ENCODE measurements at regions of chr15 and their contacts with region 1.

Region 1: GRCh38 chr15:63891079-63891767 is 57.5 kb upstream of the HERC1 start:
- DNase-seq: peak; percentile 60 to 78 (median 76)
- H3K4me3 ChIP-seq: no peak overlapping the region
- H3K4me3 Mint-ChIP-seq: no peak overlapping the region
- H3K27ac ChIP-seq: no peak overlapping the region
- H3K27ac Mint-ChIP-seq: peak overlapping the region in 1 of 7 donors; percentile 26
- H3K4me1 ChIP-seq: peaks cover 52 to 57% of the 10 kb centered on the region in 2 donors
- H3K4me1 Mint-ChIP-seq: peaks cover 56% of the 10 kb centered on the region
- H3K27me3 ChIP-seq: no peaks in the 10 kb centered on the region
- H3K27me3 Mint-ChIP-seq: peaks cover 0 to 7% (median 0%) of the 10 kb centered on the region in 3 donors
- CTCF ChIP-seq: peak; percentile 94

Region 2: GRCh38 chr15:63833021-63833696 is 58.1 kb before region 1 on chr15:
- intact Hi-C with region 1: loop called (anchors 2 to 5 kb)
- DNase-seq: peak in 1 of 3 donors; percentile 11
- H3K4me3 ChIP-seq: peak overlapping the region; percentile 87 to 97 (median 93)
- H3K4me3 Mint-ChIP-seq: peak overlapping the region; percentile 88 to 92
- H3K27ac ChIP-seq: peak overlapping the region; percentile 73 to 93
- H3K27ac Mint-ChIP-seq: peak overlapping the region; percentile 88 to 99 (median 96)
- H3K4me1 ChIP-seq: peaks cover 15 to 32% of the 10 kb centered on the region in 2 donors
- H3K4me1 Mint-ChIP-seq: peaks cover 40% of the 10 kb centered on the region
- H3K27me3 ChIP-seq: no peaks in the 10 kb centered on the region
- H3K27me3 Mint-ChIP-seq: peaks cover 0 to 9% (median 3%) of the 10 kb centered on the region in 3 donors
- CTCF ChIP-seq: no peak

Region 3: GRCh38 chr15:63915873-63916771 is 24.9 kb after region 1 on chr15:
- intact Hi-C with region 1: no loop called
- DNase-seq: no peak
- H3K4me3 ChIP-seq: no peak overlapping the region
- H3K4me3 Mint-ChIP-seq: no peak overlapping the region
- H3K27ac ChIP-seq: no peak overlapping the region
- H3K27ac Mint-ChIP-seq: no peak overlapping the region
- H3K4me1 ChIP-seq: no peaks in the 10 kb centered on the region
- H3K4me1 Mint-ChIP-seq: peaks cover 3% of the 10 kb centered on the region
- H3K27me3 ChIP-seq: no peaks in the 10 kb centered on the region
- H3K27me3 Mint-ChIP-seq: peaks cover 2 to 12% (median 3%) of the 10 kb centered on the region in 3 donors
- CTCF ChIP-seq: peak; percentile 16

Region 4: GRCh38 chr15:63983061-63983711 is 92.0 kb after region 1 on chr15:
- intact Hi-C with region 1: no loop called
- DNase-seq: no peak
- H3K4me3 ChIP-seq: no peak overlapping the region
- H3K4me3 Mint-ChIP-seq: no peak overlapping the region
- H3K27ac ChIP-seq: no peak overlapping the region
- H3K27ac Mint-ChIP-seq: peak overlapping the region in 2 of 7 donors; percentile 47 to 71
- H3K4me1 ChIP-seq: peaks cover 40 to 51% of the 10 kb centered on the region in 2 donors
- H3K4me1 Mint-ChIP-seq: peaks cover 52% of the 10 kb centered on the region
- H3K27me3 ChIP-seq: no peaks in the 10 kb centered on the region
- H3K27me3 Mint-ChIP-seq: peaks cover 0 to 1% (median 1%) of the 10 kb centered on the region in 3 donors
- CTCF ChIP-seq: no peak

Region 5: DNA sequence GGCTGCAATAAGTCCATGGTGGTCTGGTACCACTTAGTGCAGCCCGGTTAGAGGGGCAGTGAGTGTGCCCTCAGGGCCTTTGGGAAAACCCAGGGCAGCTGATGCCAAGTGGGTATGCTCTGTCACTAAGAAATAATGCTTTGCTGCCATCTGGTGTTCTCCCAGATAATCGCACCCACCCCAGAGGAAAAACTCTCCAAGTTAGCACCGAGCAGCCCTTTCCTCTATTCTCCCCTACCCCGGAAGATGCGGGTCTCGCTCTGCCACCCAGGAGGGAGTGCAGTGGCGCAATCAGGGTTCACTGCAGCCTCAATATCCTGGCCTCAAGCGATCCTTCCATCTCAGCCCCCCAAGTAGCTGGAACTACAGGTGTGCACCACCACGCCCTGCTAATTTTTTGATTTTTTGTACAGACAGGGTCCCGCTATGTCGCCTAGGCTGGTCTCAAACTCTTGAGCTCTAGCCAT is 176.4 kb after region 1 on chr15:
- intact Hi-C with region 1: loop called in 1 of 2 experiments (anchors 5 kb)
- DNase-seq: peak; percentile 50 to 78 (median 70)
- H3K4me3 ChIP-seq: no peak overlapping the region
- H3K4me3 Mint-ChIP-seq: no peak overlapping the region
- H3K27ac ChIP-seq: no peak overlapping the region
- H3K27ac Mint-ChIP-seq: peak overlapping the region in 1 of 7 donors; percentile 36
- H3K4me1 ChIP-seq: peaks cover 28 to 40% of the 10 kb centered on the region in 2 donors
- H3K4me1 Mint-ChIP-seq: peaks cover 40% of the 10 kb centered on the region
- H3K27me3 ChIP-seq: no peaks in the 10 kb centered on the region
- H3K27me3 Mint-ChIP-seq: no peaks in the 10 kb centered on the region
- CTCF ChIP-seq: peak; percentile 89

Region 6: DNA sequence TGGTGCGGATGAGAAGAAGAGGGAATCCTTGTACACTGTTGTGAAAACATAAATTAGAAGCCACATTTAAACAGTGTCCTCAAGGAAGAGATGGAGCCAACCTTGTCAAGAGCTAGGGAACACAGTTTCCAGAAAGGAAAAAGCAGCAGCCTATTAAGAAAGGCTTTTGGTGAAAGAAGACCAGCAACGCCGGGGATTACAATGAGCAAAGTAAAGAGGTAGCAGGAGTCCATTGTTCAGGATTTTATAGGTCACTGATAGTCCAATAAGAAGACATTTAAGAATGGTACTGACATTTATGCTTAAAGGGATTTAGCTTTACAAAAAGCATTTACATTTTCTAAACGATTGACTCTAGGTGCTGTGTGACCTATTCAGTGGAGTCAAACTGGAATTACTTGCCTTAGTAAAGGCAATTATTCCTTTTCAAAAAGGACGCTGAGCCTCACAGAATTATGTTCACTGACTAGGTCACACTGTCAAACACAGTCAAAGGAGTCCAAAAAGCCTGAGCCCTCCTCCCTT is 424.0 kb after region 1 on chr15:
- intact Hi-C with region 1: no loop called
- DNase-seq: no peak
- H3K4me3 ChIP-seq: no peak overlapping the region
- H3K4me3 Mint-ChIP-seq: no peak overlapping the region
- H3K27ac ChIP-seq: no peak overlapping the region
- H3K27ac Mint-ChIP-seq: peak overlapping the region in 1 of 7 donors; percentile 27
- H3K4me1 ChIP-seq: no peaks in the 10 kb centered on the region
- H3K4me1 Mint-ChIP-seq: peaks cover 2% of the 10 kb centered on the region
- H3K27me3 ChIP-seq: no peaks in the 10 kb centered on the region
- H3K27me3 Mint-ChIP-seq: no peaks in the 10 kb centered on the region
- CTCF ChIP-seq: no peak

Measured in CD14-positive monocyte (primary cell).